Right ventricle myocardium inferior (tissue), 1 donor: ENCODE measurements at regions of chr2 and their contacts with region 1.

Region 1: GRCh38 chr2:85437488-85438284 is 19.2 kb downstream of the SH2D6 start:
- DNase-seq: peak; percentile 96
- ATAC-seq: peak; percentile 82

Region 2: GRCh38 chr2:85501248-85501647 is 63.6 kb after region 1 on chr2:
- intact Hi-C with region 1: loop called (anchors 2 kb)
- DNase-seq: no peak
- ATAC-seq: peak; percentile 17